Activated CD4-positive, alpha-beta T cell treated with anti-CD3 and anti-CD28 coated beads, Interleukin-2, amount 10 ng/mL, durations not matched to agents 7 days and 5 days (primary cell): ENCODE measurements at regions of chr17 and their contacts with region 1.

Region 1: DNA sequence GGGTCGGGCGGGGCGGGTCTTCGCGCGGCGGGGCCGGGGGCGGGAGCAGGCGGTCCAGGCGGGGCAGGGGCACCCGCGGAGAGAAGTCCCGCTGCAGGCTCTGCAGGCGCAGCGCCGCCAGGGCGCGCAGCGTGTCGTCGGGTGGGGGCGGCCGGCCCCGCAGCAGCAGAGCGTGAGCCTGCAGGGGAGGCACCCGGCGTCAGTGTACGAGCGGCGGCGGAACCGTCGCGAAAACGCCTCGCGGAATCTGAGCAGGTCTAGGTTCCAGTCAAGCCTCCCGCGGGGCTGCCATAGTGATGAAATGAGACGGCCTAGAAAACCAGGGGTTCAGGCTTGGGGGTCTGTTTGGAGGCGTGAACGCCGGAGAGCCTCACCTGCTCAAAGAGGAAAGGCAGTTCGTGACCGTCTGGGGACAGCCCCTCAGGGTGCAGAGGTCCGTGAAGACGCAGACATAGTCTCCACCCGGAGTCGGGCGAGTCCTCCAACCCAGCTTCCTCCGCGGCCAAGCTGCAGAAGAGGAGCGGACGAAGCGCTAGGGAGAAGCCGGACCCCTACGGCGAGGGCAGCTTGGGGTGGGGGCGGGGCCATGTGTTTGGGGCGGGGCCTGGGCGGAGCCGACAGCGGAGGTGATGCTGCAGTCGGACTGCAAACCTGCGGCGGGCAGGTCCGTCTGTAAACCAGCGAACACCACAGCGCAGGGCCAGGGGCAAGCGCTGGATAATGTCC is 6.4 kb downstream of the PLEKHH3 start:
- DNase-seq: peak; percentile 41
- H3K4me3 Mint-ChIP-seq: peak overlapping the region; percentile 48
- H3K27ac Mint-ChIP-seq: no peak overlapping the region
- H3K4me1 Mint-ChIP-seq: peaks cover 23% of the 10 kb centered on the region
- H3K27me3 Mint-ChIP-seq: peaks cover 51% of the 10 kb centered on the region

Region 2: DNA sequence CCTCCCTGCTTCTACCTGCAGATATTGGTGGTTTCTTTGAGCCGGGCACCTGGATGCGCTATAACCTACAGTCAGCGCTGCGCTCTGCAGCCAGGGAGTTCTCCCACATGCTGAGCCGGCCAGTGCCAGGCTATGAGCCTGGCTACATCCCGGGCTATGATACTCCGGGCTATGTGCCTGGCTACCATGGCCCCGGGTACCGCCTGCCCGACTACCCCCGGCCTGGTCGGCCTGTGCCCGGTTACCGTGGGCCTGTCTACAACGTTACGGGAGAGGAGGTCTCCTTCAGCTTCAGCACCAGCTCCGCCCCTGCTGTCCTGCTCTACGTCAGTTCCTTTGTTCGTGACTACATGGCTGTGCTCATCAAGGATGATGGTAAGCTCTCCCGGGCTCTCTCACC is 25.1 kb after region 1 on chr17:
- CTCF ChIA-PET with region 1: no interaction called
- POLR2A ChIA-PET with region 1: interaction called, 10 read pairs
- DNase-seq: no peak
- H3K4me3 Mint-ChIP-seq: no peak overlapping the region
- H3K27ac Mint-ChIP-seq: no peak overlapping the region
- H3K4me1 Mint-ChIP-seq: no peaks in the 10 kb centered on the region
- H3K27me3 Mint-ChIP-seq: peaks cover 2% of the 10 kb centered on the region